Dendritic cell treated with granulocyte-macrophage colony-stimulating factor and Interleukin-4, amounts not matched to agents 40 ng/mL and 50 ng/mL, for 4 days (primary cell): ENCODE measurements at regions of chr9 and their contacts with region 1.

Region 1: GRCh38 chr9:124040935-124041816 is 29.6 kb downstream of the LHX2 start:
- H3K4me3 Mint-ChIP-seq: peak overlapping the region; percentile 66
- H3K27ac Mint-ChIP-seq: no peak overlapping the region
- H3K4me1 Mint-ChIP-seq: peaks cover 20% of the 10 kb centered on the region
- H3K27me3 Mint-ChIP-seq: peaks cover 97% of the 10 kb centered on the region

Region 2: DNA sequence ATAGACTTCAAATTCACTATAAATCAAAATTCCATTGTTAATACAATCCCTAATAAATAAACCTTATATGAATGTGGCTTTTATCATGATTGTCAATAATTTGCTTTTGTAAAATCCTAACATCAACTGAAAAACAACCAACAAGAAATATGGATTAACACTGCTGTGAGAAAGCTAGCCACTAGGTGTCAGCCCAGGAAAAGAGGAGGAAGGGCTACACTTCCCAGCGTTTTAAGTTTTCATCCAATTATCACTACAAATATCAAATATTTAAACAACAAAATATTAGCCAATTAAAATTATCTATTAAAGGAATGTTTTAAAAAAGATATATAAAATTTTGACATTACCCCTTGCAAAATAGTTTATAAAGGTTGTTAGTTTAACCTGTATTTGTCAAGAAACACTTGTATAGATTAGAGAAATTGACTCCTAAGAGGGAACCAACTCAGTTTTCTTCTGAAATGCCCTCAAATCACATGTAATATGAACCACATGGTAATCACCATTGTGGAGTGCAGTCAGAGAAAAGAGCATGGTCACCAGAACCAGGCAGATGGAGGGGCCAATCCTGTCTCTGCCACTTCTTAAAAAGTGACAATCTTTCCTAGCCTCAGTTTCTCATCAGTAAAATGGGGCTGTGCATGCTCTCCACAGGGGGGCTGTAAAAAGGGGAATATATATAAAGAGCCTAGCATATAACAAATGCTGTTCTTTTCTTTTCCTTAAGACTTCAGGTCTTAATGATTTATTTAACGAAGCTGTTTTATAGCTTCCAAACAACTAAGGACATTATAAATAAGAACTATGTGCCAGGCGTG is 497.0 kb before region 1 on chr9:
- intact Hi-C with region 1: loop called (anchors 1 kb)
- H3K4me3 Mint-ChIP-seq: no peak overlapping the region
- H3K27ac Mint-ChIP-seq: no peak overlapping the region
- H3K4me1 Mint-ChIP-seq: peaks cover 20% of the 10 kb centered on the region
- H3K27me3 Mint-ChIP-seq: no peaks in the 10 kb centered on the region

Region 3: GRCh38 chr9:123725389-123725788 is 315.8 kb before region 1 on chr9:
- intact Hi-C with region 1: loop called (anchors 5 kb)
- H3K4me3 Mint-ChIP-seq: no peak overlapping the region
- H3K27ac Mint-ChIP-seq: no peak overlapping the region
- H3K4me1 Mint-ChIP-seq: peaks cover 27% of the 10 kb centered on the region
- H3K27me3 Mint-ChIP-seq: no peaks in the 10 kb centered on the region